T-cell (primary cell): ENCODE measurements at regions of chr7 and their contacts with region 1.

Region 1: GRCh38 chr7:15652776-15653290 is 33.6 kb downstream of the MEOX2 start:
- DNase-seq: no peak
- ATAC-seq: no peak
- H3K4me3 ChIP-seq: no peak overlapping the region
- H3K4me3 Mint-ChIP-seq: no peak overlapping the region
- H3K27ac ChIP-seq: no peak overlapping the region
- H3K27ac Mint-ChIP-seq: no peak overlapping the region
- H3K4me1 ChIP-seq: no peaks in the 10 kb centered on the region
- H3K4me1 Mint-ChIP-seq: no peaks in the 10 kb centered on the region
- H3K27me3 ChIP-seq: no peaks in the 10 kb centered on the region
- H3K27me3 Mint-ChIP-seq: no peaks in the 10 kb centered on the region

Region 2: DNA sequence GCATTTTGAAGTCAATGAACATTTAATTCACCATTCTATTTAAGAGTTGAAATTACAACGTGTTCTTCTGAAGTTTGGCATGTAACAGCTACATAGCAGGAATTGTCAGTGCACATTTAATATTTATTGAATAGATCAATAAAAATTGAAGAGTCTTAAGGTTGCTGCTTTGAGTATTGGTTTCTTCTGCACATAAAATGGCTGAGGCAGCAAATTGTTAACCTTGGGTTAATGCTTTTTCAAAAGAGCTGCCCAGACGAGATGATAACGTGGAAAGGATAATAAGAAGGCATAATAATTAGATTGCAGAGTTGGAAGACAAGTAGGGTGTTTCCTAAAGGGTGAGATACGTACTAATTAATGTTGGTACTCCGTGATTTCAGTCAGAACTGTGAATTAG is 294.7 kb before region 1 on chr7:
- CTCF ChIA-PET with region 1: no interaction called
- POLR2A ChIA-PET with region 1: no interaction called
- DNase-seq: no peak
- ATAC-seq: no peak
- H3K4me3 ChIP-seq: no peak overlapping the region
- H3K4me3 Mint-ChIP-seq: no peak overlapping the region
- H3K27ac ChIP-seq: no peak overlapping the region
- H3K27ac Mint-ChIP-seq: no peak overlapping the region
- H3K4me1 ChIP-seq: no peaks in the 10 kb centered on the region
- H3K4me1 Mint-ChIP-seq: no peaks in the 10 kb centered on the region
- H3K27me3 ChIP-seq: no peaks in the 10 kb centered on the region
- H3K27me3 Mint-ChIP-seq: no peaks in the 10 kb centered on the region

Region 3: DNA sequence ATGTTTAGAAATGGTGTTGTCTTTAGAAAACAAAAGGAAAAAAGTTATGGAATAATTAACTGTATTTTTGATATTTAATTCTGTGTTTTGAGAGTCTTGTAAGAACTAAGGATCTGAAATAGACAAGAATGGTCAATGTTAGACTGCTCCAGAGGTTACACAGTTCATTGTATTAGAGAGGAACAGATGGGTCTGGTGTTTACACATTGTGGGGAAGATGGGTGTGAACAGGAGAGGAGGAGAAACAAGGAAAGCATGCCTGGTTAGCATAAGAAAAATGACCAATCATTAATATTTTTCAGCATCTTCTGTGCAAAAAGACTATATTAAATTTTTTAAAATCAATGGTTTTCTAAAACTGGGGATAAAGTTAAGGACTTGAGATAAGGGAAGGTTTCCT is 21.8 kb after region 1 on chr7:
- CTCF ChIA-PET with region 1: no interaction called
- POLR2A ChIA-PET with region 1: no interaction called
- DNase-seq: no peak
- ATAC-seq: no peak
- H3K4me3 ChIP-seq: no peak overlapping the region
- H3K4me3 Mint-ChIP-seq: no peak overlapping the region
- H3K27ac ChIP-seq: no peak overlapping the region
- H3K27ac Mint-ChIP-seq: no peak overlapping the region
- H3K4me1 ChIP-seq: no peaks in the 10 kb centered on the region
- H3K4me1 Mint-ChIP-seq: no peaks in the 10 kb centered on the region
- H3K27me3 ChIP-seq: no peaks in the 10 kb centered on the region
- H3K27me3 Mint-ChIP-seq: no peaks in the 10 kb centered on the region

Region 4: GRCh38 chr7:15836651-15837050 is 183.8 kb after region 1 on chr7:
- CTCF ChIA-PET with region 1: no interaction called
- POLR2A ChIA-PET with region 1: interaction called in 1 of 2 experiments, 10 read pairs
- DNase-seq: no peak
- ATAC-seq: no peak
- H3K4me3 ChIP-seq: no peak overlapping the region
- H3K4me3 Mint-ChIP-seq: no peak overlapping the region
- H3K27ac ChIP-seq: no peak overlapping the region
- H3K27ac Mint-ChIP-seq: no peak overlapping the region
- H3K4me1 ChIP-seq: no peaks in the 10 kb centered on the region
- H3K4me1 Mint-ChIP-seq: no peaks in the 10 kb centered on the region
- H3K27me3 ChIP-seq: no peaks in the 10 kb centered on the region
- H3K27me3 Mint-ChIP-seq: no peaks in the 10 kb centered on the region